ENCODE measurements at regions of chr13 and their contacts with region 1.

Region 1: GRCh38 chr13:29508130-29508875 is 87.2 kb downstream of the SLC7A1 start:
- DNase-seq: peak; percentile 79
- H3K4me3 Mint-ChIP-seq: no peak overlapping the region
- H3K27ac Mint-ChIP-seq: no peak overlapping the region
- H3K4me1 Mint-ChIP-seq: no peaks in the 10 kb centered on the region
- H3K27me3 Mint-ChIP-seq: peaks cover 4% of the 10 kb centered on the region

Region 2: DNA sequence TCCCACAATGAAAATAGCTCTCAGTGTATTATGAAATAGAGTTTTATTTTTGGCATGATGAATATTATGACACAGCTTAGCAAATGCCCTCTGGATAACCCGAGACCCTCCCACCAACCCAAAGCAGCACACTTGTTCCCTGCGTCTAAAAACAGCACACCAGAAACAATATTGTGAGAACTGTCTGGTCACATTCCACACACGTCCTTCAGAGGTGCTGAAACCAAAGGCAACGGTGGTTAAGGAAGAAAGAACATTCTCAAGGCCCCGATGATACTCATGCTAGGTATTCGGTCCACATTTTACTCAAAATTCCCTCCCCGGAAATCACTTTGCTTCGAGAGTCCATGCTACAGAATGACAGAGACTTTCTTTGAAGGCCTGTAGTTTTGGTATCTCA is 69.5 kb before region 1 on chr13:
- CTCF ChIA-PET with region 1: no interaction called
- DNase-seq: no peak
- H3K4me3 Mint-ChIP-seq: no peak overlapping the region
- H3K27ac Mint-ChIP-seq: no peak overlapping the region
- H3K4me1 Mint-ChIP-seq: no peaks in the 10 kb centered on the region
- H3K27me3 Mint-ChIP-seq: peaks cover 4% of the 10 kb centered on the region

Region 3: DNA sequence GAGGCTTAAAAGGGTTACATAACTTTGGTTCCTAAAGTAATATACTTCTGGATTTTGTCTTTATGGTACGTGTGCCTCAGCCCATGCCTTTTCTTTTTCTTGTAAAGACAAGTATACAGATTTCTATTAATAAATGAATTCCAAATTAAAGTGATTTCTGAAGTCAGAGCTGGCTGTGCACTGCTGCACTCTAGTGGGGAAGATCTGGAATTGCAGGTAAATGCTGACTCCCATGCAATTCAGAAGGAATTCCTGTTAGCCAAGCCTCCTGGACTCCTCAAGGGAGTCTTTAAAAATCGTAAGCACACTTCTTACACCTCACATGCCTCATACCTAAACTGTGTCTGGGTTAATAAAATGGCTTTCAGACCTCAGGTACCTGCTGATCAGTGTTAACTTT is 205.5 kb after region 1 on chr13:
- CTCF ChIA-PET with region 1: interaction called, 47 read pairs
- DNase-seq: no peak
- H3K4me3 Mint-ChIP-seq: no peak overlapping the region
- H3K27ac Mint-ChIP-seq: no peak overlapping the region
- H3K4me1 Mint-ChIP-seq: no peaks in the 10 kb centered on the region
- H3K27me3 Mint-ChIP-seq: peaks cover 20% of the 10 kb centered on the region

Region 4: GRCh38 chr13:29801737-29802305 is 293.5 kb after region 1 on chr13:
- CTCF ChIA-PET with region 1: no interaction called
- DNase-seq: no peak
- H3K4me3 Mint-ChIP-seq: no peak overlapping the region
- H3K27ac Mint-ChIP-seq: no peak overlapping the region
- H3K4me1 Mint-ChIP-seq: no peaks in the 10 kb centered on the region
- H3K27me3 Mint-ChIP-seq: no peaks in the 10 kb centered on the region